HCT116 (cell line): ENCODE measurements at regions of chr10 and their contacts with region 1.

Region 1: GRCh38 chr10:15585303-15585715 is 134.4 kb downstream of the ITGA8 start:
- DNase-seq: peak; percentile 51
- ATAC-seq: peak; percentile 100
- H3K4me3 ChIP-seq: no peak overlapping the region
- H3K27ac ChIP-seq: no peak overlapping the region
- H3K4me1 ChIP-seq: no peaks in the 10 kb centered on the region
- H3K27me3 ChIP-seq: peaks cover 37% of the 10 kb centered on the region
- CTCF ChIP-seq: peak; percentile 60 to 97 (median 93)
- POLR2A ChIP-seq: no peak
- RAD21 ChIP-seq: peak; percentile 68

Region 2: DNA sequence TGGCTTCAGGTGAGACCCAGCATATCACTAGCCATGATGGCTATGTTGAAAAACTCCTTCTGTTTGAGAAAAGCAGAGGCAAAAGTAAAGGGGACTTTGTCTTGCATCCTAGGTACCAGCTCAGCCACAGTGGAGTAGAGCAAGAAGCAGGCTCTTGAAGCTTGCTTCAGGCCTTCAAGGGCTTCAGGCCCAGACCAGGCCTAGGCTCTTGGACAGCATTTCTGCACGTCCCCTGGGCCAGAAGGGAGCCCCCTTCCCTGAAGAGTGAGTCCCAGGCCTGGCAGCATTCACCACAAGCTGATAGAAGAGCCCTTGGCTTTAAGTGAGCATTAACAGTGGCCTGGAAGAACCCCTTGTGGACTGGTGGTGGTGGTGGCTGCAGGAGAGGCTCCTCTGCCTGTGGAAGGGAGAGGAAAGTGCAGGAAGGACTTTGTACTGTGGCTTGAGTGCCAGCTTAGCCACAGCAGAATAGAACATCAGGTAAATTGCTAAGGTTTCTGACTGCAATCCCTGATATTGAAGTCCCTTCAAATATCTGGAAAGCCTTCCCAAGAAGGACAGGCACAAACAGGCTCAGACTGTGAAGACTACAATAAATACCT is 186.1 kb before region 1 on chr10:
- CTCF ChIA-PET with region 1: no interaction called
- POLR2A ChIA-PET with region 1: no interaction called
- RAD21 ChIA-PET with region 1: no interaction called
- intact Hi-C with region 1: no loop called
- DNase-seq: no peak
- ATAC-seq: no peak
- H3K4me3 ChIP-seq: no peak overlapping the region
- H3K27ac ChIP-seq: no peak overlapping the region
- H3K4me1 ChIP-seq: no peaks in the 10 kb centered on the region
- H3K27me3 ChIP-seq: no peaks in the 10 kb centered on the region
- CTCF ChIP-seq: no peak
- POLR2A ChIP-seq: no peak
- RAD21 ChIP-seq: no peak

Region 3: GRCh38 chr10:15572531-15573045 is 12.7 kb before region 1 on chr10:
- CTCF ChIA-PET with region 1: interaction called, 16 read pairs
- POLR2A ChIA-PET with region 1: no interaction called
- RAD21 ChIA-PET with region 1: no interaction called
- intact Hi-C with region 1: no loop called
- DNase-seq: no peak
- ATAC-seq: no peak
- H3K4me3 ChIP-seq: no peak overlapping the region
- H3K27ac ChIP-seq: no peak overlapping the region
- H3K4me1 ChIP-seq: no peaks in the 10 kb centered on the region
- H3K27me3 ChIP-seq: peaks cover 21% of the 10 kb centered on the region; the same call in 1 of the 2 replicates
- CTCF ChIP-seq: no peak
- POLR2A ChIP-seq: no peak
- RAD21 ChIP-seq: no peak